Activated B cell treated with CpG ODN at 0.5 μM for 24 hours (primary cell): ENCODE measurements at regions of chr1 and their contacts with region 1.

Region 1: DNA sequence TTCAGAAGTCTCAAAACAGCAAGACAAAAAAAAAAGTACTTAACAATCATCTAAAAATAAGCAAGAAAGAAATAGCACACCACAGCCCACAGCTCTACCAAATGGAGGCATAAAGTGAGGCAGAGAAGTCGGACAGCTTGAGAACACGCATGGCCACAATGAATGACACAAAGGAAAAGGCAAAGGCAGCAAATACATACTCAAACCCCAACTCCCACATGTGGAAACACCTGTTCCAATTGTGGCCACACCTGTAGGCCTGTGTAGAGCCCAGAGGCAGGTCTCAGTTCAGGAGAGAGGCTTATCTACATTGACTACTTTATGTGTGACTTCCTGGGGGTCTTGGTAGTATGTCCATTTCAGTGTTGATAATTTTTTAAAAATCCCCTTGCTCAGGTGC is 543.5 kb downstream of the LMO4 start:
- DNase-seq: no peak
- ATAC-seq: peak; percentile 34
- H3K4me3 Mint-ChIP-seq: peak overlapping the region; percentile 25
- H3K27ac Mint-ChIP-seq: peak overlapping the region; percentile 89
- H3K4me1 Mint-ChIP-seq: peaks cover 48% of the 10 kb centered on the region
- H3K27me3 Mint-ChIP-seq: no peaks in the 10 kb centered on the region
- CTCF ChIP-seq: no peak

Region 2: GRCh38 chr1:87348341-87348999 is 523.7 kb before region 1 on chr1:
- CTCF ChIA-PET with region 1: no interaction called
- POLR2A ChIA-PET with region 1: no interaction called
- intact Hi-C with region 1: no loop called
- DNase-seq: no peak
- ATAC-seq: no peak
- H3K4me3 Mint-ChIP-seq: no peak overlapping the region
- H3K27ac Mint-ChIP-seq: no peak overlapping the region
- H3K4me1 Mint-ChIP-seq: peaks cover 12% of the 10 kb centered on the region
- H3K27me3 Mint-ChIP-seq: no peaks in the 10 kb centered on the region
- CTCF ChIP-seq: no peak

Region 3: GRCh38 chr1:87826681-87827251 is 45.4 kb before region 1 on chr1:
- CTCF ChIA-PET with region 1: no interaction called
- POLR2A ChIA-PET with region 1: no interaction called
- intact Hi-C with region 1: loop called (anchors 2 kb)
- DNase-seq: no peak
- ATAC-seq: peak; percentile 95
- H3K4me3 Mint-ChIP-seq: peak overlapping the region; percentile 44
- H3K27ac Mint-ChIP-seq: peak overlapping the region; percentile 65
- H3K4me1 Mint-ChIP-seq: peaks cover 43% of the 10 kb centered on the region
- H3K27me3 Mint-ChIP-seq: no peaks in the 10 kb centered on the region
- CTCF ChIP-seq: no peak